PC-3 (cell line): ENCODE measurements at regions of chr1 and their contacts with region 1.

Region 1: GRCh38 chr1:45303582-45304310 is 22.9 kb upstream of the HPDL start:
- DNase-seq: peak; percentile 98
- ATAC-seq: peak; percentile 90
- H3K4me3 ChIP-seq: peak overlapping the region; percentile 73
- H3K27ac ChIP-seq: peak overlapping the region; percentile 71
- H3K4me1 ChIP-seq: peaks cover 22% of the 10 kb centered on the region
- H3K27me3 ChIP-seq: no peaks in the 10 kb centered on the region
- CTCF ChIP-seq: peak; percentile 78

Region 2: DNA sequence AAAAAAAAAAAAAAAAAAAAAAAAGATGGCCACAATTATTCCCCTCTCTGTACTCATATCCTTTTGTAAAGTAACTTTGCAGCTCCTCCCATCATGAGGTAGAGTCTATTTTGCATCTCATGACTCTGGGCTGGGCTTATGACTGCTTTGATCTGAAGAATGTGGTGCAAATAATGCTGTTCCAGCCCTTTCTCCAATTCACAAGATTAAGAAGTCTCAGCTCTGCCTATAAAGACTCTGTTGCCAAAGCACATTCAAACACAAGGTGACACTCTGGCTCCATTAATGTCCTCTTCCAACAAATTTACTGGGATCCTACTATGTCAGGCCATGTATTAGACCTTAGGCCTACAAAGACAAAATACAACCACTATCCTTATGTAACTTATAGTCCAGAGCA is 395.9 kb before region 1 on chr1:
- CTCF ChIA-PET with region 1: no interaction called
- POLR2A ChIA-PET with region 1: no interaction called
- intact Hi-C with region 1: loop called (anchors 5 kb)
- DNase-seq: no peak
- ATAC-seq: peak; percentile 22; the same call in 1 of the 2 replicates
- H3K4me3 ChIP-seq: no peak overlapping the region
- H3K27ac ChIP-seq: no peak overlapping the region
- H3K4me1 ChIP-seq: no peaks in the 10 kb centered on the region
- H3K27me3 ChIP-seq: no peaks in the 10 kb centered on the region
- CTCF ChIP-seq: no peak

Region 3: DNA sequence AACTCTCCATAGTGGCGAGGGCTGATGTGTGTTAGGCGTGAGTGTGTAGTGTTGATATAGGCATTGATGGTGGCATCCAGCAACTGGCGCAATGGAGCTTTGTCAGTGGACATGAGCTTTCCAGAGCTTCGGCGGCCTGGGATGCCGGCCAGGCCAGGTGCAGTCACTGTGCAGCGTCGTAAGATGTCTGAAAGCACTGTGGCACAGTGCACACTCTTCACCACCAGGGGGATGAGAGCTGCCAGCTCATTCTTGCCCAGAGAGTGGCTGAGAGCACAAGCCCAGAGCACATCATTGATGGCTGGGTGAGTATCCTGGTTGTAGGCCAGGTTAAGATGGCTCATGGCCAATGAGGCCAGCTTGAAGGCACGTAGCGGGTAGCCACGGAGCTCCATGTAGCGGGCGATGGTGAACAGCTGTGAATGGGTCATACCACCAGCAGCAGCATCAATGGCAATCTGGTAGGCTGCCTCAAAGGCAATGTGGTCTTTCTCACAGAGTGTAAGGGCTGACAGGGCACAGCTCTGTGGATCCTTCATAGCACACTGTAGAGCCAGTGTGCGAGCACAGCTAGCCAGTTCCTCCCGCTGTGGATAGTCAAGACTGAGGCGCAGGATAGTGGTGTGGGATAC is 285.0 kb before region 1 on chr1:
- CTCF ChIA-PET with region 1: interaction called, 38 read pairs
- POLR2A ChIA-PET with region 1: interaction called, 8 read pairs
- intact Hi-C with region 1: loop called (anchors 1 kb)
- DNase-seq: peak; percentile 87
- ATAC-seq: peak; percentile 94
- H3K4me3 ChIP-seq: no peak overlapping the region
- H3K27ac ChIP-seq: no peak overlapping the region
- H3K4me1 ChIP-seq: 0 out of 2 replicates have a peak, but pooled peaks cover 2% of the 10 kb centered on the region
- H3K27me3 ChIP-seq: no peaks in the 10 kb centered on the region
- CTCF ChIP-seq: peak; percentile 84

Region 4: GRCh38 chr1:45205910-45206721 is 97.6 kb before region 1 on chr1 and contains the start of gene ZSWIM5:
- CTCF ChIA-PET with region 1: no interaction called
- POLR2A ChIA-PET with region 1: no interaction called
- intact Hi-C with region 1: loop called (anchors 1 kb)
- DNase-seq: peak; percentile 78
- ATAC-seq: peak; percentile 73
- H3K4me3 ChIP-seq: peak within 1 kb of the TSS; percentile 91
- H3K27ac ChIP-seq: no peak within 1 kb of the TSS
- H3K4me1 ChIP-seq: peaks cover 16% of the 10 kb centered on the region
- H3K27me3 ChIP-seq: no peaks in the 10 kb centered on the region
- CTCF ChIP-seq: no peak
- total RNA-seq, gene ZSWIM5: 1.4 and 1.6 TPM in 2 replicates

Region 5: DNA sequence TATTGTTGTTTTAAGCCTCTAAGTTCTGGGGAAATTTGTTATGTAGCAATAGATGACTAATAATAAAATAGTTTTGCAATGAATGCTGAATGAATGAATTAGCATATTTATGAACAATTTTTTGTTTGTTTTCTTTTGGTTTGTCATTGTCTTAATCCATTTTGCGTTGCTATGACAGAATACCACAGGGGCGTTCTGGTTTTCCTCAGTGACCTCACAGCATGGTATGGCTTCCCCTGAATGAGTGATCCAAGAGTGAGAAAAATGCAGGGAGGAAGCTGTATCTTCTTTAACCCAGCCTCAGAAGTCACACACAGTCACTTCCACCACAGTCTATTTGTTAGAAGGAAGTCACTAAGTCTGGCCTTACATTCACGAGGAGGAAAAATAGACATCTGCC is 30.8 kb before region 1 on chr1:
- CTCF ChIA-PET with region 1: no interaction called
- POLR2A ChIA-PET with region 1: no interaction called
- intact Hi-C with region 1: no loop called
- DNase-seq: peak; percentile 47
- ATAC-seq: no peak
- H3K4me3 ChIP-seq: no peak overlapping the region
- H3K27ac ChIP-seq: no peak overlapping the region; the same call in 1 of the 2 replicates
- H3K4me1 ChIP-seq: no peaks in the 10 kb centered on the region
- H3K27me3 ChIP-seq: no peaks in the 10 kb centered on the region
- CTCF ChIP-seq: no peak

Region 6: GRCh38 chr1:45322486-45323040 is 18.8 kb after region 1 on chr1:
- CTCF ChIA-PET with region 1: interaction called, 12 read pairs
- POLR2A ChIA-PET with region 1: no interaction called
- intact Hi-C with region 1: no loop called
- DNase-seq: no peak
- ATAC-seq: no peak
- H3K4me3 ChIP-seq: no peak overlapping the region
- H3K27ac ChIP-seq: no peak overlapping the region
- H3K4me1 ChIP-seq: no peaks in the 10 kb centered on the region
- H3K27me3 ChIP-seq: no peaks in the 10 kb centered on the region
- CTCF ChIP-seq: no peak

Region 7: DNA sequence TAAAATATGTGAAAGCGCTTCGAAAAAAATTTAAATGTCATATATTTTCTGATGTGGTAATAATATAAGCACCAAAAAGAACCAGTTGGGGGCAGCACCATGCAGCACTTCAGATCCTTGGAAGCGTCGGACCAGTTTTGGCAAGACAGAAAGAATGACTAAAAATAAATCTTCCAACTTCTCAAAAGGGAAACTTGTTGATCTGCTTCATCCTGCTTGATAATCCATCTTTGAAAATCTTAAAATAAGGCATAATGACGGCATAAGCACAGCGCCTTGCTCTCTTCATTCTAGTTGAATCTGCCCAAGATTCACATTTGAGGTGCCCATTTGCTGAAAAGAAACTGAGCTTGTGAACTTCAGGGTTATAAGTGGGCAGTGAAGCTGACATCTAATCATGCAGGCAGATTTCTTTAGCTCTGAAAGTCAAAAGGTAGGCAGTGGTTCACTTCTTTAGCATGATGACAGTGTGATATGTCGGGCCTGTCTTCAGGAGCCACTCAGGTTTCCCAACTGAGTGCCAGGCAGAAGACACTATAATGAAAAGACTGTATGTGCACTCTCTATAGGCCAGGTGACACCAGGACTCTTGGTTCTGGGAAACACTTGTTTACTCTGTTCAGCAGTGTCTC is 56.3 kb after region 1 on chr1:
- CTCF ChIA-PET with region 1: no interaction called
- POLR2A ChIA-PET with region 1: interaction called, 18 read pairs
- intact Hi-C with region 1: no loop called
- DNase-seq: peak; percentile 78
- ATAC-seq: peak; percentile 52
- H3K4me3 ChIP-seq: peak overlapping the region; percentile 28; the same call in 1 of the 2 replicates
- H3K27ac ChIP-seq: no peak overlapping the region
- H3K4me1 ChIP-seq: peaks cover 22% of the 10 kb centered on the region
- H3K27me3 ChIP-seq: no peaks in the 10 kb centered on the region
- CTCF ChIP-seq: peak; percentile 79